ENCODE measurements at regions of chr6 and their contacts with region 1.

Region 1: GRCh38 chr6:44172731-44173500 is 14.3 kb downstream of the CAPN11 start:
- DNase-seq: peak in 1 of 2 experiments; percentile 91
- H3K4me3 ChIP-seq: no peak overlapping the region
- H3K27ac ChIP-seq: no peak overlapping the region
- H3K4me1 ChIP-seq: peaks cover 0 to 12% (median 3%) of the 10 kb centered on the region in 4 experiments; a peak in 6 of 7 replicates
- H3K27me3 ChIP-seq: no peaks in the 10 kb centered on the region
- CTCF ChIP-seq: peak; percentile 89 to 94 (median 90)
- EP300 ChIP-seq: no peak
- POLR2A ChIP-seq: no peak
- RAD21 ChIP-seq: peak; percentile 93 to 94

Region 2: DNA sequence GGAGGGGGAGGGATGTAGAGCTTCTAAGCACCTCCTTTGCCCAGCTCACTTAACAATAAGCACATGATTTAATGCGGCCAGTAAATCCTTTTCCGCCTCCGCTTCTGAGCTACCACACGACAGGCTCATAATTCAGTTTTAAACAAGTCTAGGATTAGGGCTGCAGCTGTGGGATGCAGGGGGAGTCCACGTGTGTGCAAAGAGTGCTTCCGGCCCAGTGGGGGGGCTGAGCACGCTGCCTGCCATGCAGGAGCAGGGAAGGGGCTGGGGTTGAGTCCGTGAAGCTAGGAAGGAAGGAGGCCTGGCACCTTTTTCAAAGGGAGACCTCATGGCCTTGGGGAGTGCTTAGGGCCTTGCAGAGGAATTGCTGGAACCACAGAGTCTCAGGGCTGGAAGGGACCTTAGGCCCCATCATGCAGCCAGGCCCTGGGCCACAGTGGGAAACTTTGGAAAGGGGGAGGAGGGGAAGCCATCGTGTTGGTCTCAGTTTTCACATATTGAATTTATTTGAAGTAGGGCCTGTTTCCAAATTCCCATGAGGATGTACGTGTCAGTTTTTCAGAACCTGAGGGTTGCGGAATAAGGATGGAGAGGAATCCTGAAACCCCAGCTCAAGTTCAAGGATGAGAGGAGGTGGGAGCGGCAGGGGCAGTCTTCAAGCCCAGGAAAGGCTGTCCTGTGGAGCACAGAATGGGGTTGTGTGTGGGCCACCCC is 306.8 kb before region 1 on chr6:
- CTCF ChIA-PET with region 1: no interaction called
- POLR2A ChIA-PET with region 1: no interaction called
- DNase-seq: no peak
- H3K4me3 ChIP-seq: no peak overlapping the region
- H3K27ac ChIP-seq: no peak overlapping the region
- H3K4me1 ChIP-seq: peaks cover 0 to 13% (median 10%) of the 10 kb centered on the region in 4 experiments; a peak in 6 of 7 replicates
- H3K27me3 ChIP-seq: no peaks in the 10 kb centered on the region; a peak in 1 of 7 replicates
- CTCF ChIP-seq: no peak
- EP300 ChIP-seq: no peak
- POLR2A ChIP-seq: no peak
- RAD21 ChIP-seq: no peak

Region 3: GRCh38 chr6:44156494-44157151 is 16.3 kb before region 1 on chr6:
- CTCF ChIA-PET with region 1: interaction called, 21 read pairs
- POLR2A ChIA-PET with region 1: interaction called, 4 read pairs
- DNase-seq: no peak
- H3K4me3 ChIP-seq: no peak overlapping the region
- H3K27ac ChIP-seq: no peak overlapping the region
- H3K4me1 ChIP-seq: peaks cover 0 to 12% (median 4%) of the 10 kb centered on the region in 4 experiments; a peak in 5 of 7 replicates
- H3K27me3 ChIP-seq: no peaks in the 10 kb centered on the region
- CTCF ChIP-seq: no peak
- EP300 ChIP-seq: no peak
- POLR2A ChIP-seq: no peak
- RAD21 ChIP-seq: no peak

Region 4: DNA sequence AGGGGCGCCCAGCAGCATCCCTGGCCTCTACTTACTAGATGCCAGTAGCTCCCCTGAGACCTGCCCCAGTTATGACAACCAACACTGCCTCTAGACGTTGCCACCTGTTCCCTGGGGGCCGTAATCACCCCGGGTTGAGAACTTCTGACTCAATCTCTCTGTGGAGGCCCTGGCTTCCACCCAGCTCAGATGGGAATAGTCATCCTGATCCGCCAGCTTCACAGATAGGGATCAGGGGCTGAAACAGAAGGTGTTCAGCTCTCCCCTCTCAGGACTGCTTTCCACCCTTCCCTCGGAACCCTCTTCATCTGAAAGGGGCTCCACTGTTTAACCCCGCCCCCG is 10.9 kb before region 1 on chr6:
- CTCF ChIA-PET with region 1: interaction called, 21 read pairs
- POLR2A ChIA-PET with region 1: interaction called, 7 read pairs
- DNase-seq: peak in 1 of 2 experiments; percentile 39
- H3K4me3 ChIP-seq: no peak overlapping the region
- H3K27ac ChIP-seq: no peak overlapping the region
- H3K4me1 ChIP-seq: peaks cover 0 to 18% (median 12%) of the 10 kb centered on the region in 4 experiments; a peak in 6 of 7 replicates
- H3K27me3 ChIP-seq: 0 out of 7 replicates have a peak, but pooled peaks cover 0 to 4% (median 0%) of the 10 kb centered on the region in 4 experiments
- CTCF ChIP-seq: no peak
- EP300 ChIP-seq: no peak
- POLR2A ChIP-seq: no peak
- RAD21 ChIP-seq: no peak

Region 5: GRCh38 chr6:44192428-44193041 is 19.6 kb after region 1 on chr6:
- CTCF ChIA-PET with region 1: interaction called, 41 read pairs
- POLR2A ChIA-PET with region 1: interaction called, 7 read pairs
- DNase-seq: no peak
- H3K4me3 ChIP-seq: no peak overlapping the region
- H3K27ac ChIP-seq: no peak overlapping the region
- H3K4me1 ChIP-seq: peaks cover 4 to 8% (median 4%) of the 10 kb centered on the region in 4 experiments; a peak in 6 of 7 replicates
- H3K27me3 ChIP-seq: no peaks in the 10 kb centered on the region; a peak in 1 of 7 replicates
- CTCF ChIP-seq: no peak
- EP300 ChIP-seq: no peak
- POLR2A ChIP-seq: no peak
- RAD21 ChIP-seq: no peak

Region 6: DNA sequence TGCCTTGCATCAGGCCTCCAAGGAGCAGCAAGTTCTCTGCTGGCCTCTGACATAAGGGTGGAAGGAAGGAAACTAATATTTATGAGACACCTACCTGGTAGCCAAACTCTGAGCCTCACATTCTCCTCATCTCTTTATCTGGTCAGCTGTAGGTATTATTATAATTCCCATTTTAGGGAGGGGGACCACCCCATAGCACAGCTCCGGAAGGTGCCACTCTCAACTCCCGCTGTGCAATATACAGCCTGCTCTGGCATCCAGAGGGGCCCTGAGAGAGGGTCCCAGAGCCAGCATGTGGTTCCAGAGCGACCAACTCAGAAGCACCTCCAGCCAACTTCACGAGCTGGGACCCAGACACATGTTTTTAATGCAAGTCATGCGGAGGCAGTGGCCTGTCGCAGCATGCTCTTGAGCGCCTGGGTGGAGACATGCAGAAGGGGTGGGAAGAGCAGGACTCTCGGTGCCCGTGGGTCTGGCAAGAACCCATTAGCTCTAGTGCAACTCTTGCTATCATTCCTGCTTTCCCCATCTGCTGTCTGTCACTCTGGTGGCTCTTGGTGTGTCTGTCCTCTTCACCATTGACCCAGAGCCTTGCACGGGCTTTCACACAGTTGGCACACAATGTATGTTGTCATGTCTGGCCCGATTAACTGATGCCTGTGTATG is 28.9 kb after region 1 on chr6:
- CTCF ChIA-PET with region 1: interaction called, 10 read pairs
- POLR2A ChIA-PET with region 1: interaction called, 7 read pairs
- DNase-seq: no peak
- H3K4me3 ChIP-seq: no peak overlapping the region; a peak in 1 of 8 replicates
- H3K27ac ChIP-seq: peak overlapping the region; percentile 93
- H3K4me1 ChIP-seq: peaks cover 20 to 30% (median 28%) of the 10 kb centered on the region in 4 experiments
- H3K27me3 ChIP-seq: no peaks in the 10 kb centered on the region
- CTCF ChIP-seq: no peak
- EP300 ChIP-seq: no peak
- POLR2A ChIP-seq: no peak
- RAD21 ChIP-seq: no peak

Region 7: DNA sequence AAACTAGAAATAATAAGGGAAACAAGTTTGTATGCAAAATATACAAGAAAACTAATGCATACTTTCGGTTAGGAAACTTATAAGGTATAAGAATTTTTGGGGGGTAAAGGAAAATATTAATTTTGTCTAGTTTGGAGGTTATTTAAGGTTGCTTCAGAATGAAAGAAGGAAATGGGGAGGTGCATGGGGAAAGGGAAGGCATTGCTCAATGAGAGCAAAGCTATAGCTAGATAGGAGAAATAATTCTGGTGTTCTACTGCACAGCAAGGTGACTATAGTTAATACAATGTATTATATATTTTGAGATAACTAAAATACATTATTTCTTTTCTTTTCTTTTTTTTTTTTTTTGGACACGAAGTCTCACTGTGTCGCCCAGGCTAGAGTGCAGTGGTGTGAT is 38.4 kb after region 1 on chr6:
- CTCF ChIA-PET with region 1: interaction called, 20 read pairs
- POLR2A ChIA-PET with region 1: interaction called, 15 read pairs
- DNase-seq: no peak
- H3K4me3 ChIP-seq: no peak overlapping the region
- H3K27ac ChIP-seq: no peak overlapping the region
- H3K4me1 ChIP-seq: peaks cover 4 to 15% (median 8%) of the 10 kb centered on the region in 4 experiments
- H3K27me3 ChIP-seq: no peaks in the 10 kb centered on the region
- CTCF ChIP-seq: no peak
- EP300 ChIP-seq: no peak
- POLR2A ChIP-seq: no peak
- RAD21 ChIP-seq: no peak

Region 8: DNA sequence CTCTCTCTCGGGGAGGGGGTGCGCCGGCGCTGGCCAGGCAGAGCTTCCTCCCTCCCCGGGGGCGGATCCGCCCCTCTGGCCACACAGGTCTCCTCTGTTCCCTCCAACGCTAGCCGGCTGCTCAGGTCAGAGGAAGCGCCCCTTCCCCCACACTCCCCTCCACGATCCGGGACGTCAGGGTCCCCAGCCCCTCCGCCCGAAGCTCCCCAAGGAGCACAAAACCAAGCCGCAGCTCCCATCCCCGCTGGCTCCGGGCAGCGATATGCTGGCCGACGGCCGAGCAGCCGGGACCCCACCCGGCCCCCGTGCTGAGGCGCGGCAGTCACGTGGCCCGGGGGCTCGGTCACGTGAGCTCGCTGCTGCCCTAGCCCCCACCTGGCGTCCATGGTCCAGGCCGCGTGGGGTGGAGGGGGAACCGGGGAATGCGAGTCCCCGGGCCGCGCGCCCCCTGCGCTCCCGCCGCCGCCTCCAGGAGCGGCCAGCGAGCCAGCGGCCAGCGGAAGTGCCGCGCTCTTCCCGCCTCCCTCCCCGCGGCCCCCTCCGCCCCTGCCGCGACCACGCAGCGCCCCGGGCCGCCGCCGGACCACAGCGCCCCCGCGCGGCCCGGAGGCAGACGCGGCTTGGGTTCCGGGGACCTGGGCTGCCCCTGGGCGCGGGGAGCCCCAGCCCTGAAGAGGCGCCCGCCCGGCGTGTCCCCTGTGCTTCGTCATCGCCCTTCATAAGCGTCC is 84.3 kb after region 1 on chr6 and contains the start of gene SLC35B2:
- CTCF ChIA-PET with region 1: interaction called, 12 read pairs
- POLR2A ChIA-PET with region 1: interaction called, 9 read pairs
- DNase-seq: peak in 1 of 2 experiments; percentile 85
- H3K4me3 ChIP-seq: peak within 1 kb of the TSS; percentile 67 to 85 (median 75)
- H3K27ac ChIP-seq: peak within 1 kb of the TSS; percentile 88
- H3K4me1 ChIP-seq: peaks cover 1 to 20% (median 7%) of the 10 kb centered on the region in 4 experiments; a peak in 6 of 7 replicates
- H3K27me3 ChIP-seq: no peaks in the 10 kb centered on the region
- CTCF ChIP-seq: peak in 2 of 3 experiments; percentile 70 to 91; a peak in 3 of 4 replicates
- EP300 ChIP-seq: peak; percentile 21 to 23; a peak in 2 of 3 replicates
- POLR2A ChIP-seq: peak in 1 of 2 experiments; percentile 67; a peak in 1 of 3 replicates
- RAD21 ChIP-seq: peak; percentile 6 to 59; a peak in 3 of 4 replicates
- total RNA-seq, gene SLC35B2: 29.5 and 32.3 TPM in 2 replicates

Measured in H1 (cell line).